K562 (cell line): ENCODE measurements at regions of chr1 and their contacts with region 1.

Region 1: DNA sequence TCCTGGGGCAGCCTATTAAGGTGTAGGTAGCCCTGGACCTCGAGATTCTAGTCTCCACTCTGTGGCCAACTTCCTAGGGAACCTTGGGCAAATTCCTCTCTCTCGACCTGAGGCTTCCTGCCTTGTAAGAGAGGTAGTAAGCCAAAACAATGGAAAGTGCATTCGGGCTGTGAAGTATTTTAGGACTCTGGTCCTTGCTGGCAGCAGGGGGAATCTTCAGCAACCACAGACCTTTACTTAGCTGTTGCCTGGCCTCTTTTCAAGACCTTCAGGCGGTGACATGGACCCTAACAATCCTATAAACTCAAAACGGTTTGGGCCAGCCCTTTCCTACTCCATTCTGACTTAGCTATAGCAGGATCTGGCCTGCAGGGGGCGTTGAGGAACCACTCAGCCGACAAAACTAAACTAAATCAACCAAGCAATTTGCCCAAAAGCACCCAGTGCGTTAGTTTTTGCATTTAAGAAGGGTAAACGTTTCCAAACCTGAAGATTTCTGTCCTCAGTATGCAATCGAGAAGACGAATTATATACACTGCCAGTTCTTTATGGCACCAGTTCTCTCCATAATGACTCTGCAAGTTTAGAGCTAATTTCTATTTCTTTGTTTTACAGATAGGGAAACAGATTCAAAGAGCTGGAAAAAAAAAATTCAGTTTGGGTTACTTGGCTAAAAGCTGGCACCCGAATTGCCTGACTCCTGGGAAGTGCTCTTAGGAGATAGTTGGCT is 10.9 kb upstream of the SESN2 start:
- DNase-seq: peak; percentile 67 to 92 (median 74)
- ATAC-seq: peak; percentile 71
- H3K4me3 ChIP-seq: peak overlapping the region; percentile 0; the same call in 1 of the 2 replicates
- H3K27ac ChIP-seq: peak overlapping the region; percentile 81
- H3K4me1 ChIP-seq: peaks cover 14 to 36% of the 10 kb centered on the region in 2 experiments
- H3K27me3 ChIP-seq: no peaks in the 10 kb centered on the region
- CTCF ChIP-seq: peak; percentile 88 to 99 (median 98)
- EP300 ChIP-seq: peak; percentile 60
- POLR2A ChIP-seq: no peak
- RAD21 ChIP-seq: peak; percentile 92

Region 2: DNA sequence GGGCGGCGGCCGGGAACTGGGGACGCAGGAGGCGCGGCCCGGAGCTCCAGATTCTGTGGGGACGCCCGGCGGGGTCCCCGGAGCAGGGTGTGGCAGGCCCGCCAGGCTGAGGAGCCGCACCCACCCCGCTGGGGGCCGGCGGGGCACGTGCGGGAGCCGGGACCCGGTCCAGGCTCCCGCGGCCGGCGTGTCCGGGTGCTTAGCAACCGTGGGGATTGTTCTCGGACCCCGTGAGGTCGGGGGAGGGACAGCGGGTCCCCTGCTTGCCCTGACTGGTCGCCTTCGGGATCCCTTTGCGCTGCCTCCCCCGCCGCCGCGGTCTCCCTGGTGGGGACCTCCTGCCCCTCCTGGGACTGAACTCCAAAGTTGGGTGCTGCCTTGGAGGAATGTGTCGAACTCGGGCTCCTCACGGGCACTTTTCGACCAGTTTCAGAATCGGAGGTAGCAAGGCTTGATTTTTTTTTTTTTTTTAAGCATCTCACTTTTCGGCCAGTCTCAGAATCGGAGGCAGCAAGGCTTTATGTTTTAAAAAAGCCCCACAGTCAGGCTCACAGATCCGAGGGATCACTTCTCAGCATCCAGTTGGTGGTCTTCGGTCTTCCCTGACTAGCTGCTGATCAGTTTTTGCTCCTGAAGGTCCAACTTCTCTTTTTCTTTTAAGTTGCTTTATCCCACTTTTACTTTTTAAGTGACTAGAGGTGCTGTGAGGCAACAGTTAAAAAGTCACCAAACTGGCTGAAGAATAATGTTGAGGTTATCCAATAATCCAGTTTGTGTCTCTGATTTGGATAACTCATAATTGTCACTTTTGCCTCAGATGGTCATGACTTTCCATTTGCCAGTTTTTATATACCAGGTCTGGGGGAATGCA is 522.0 kb before region 1 on chr1:
- CTCF ChIA-PET with region 1: no interaction called
- POLR2A ChIA-PET with region 1: no interaction called
- in situ Hi-C with region 1: no loop called
- intact Hi-C with region 1: no loop called
- DNase-seq: peak; percentile 77 to 88 (median 84)
- ATAC-seq: peak; percentile 60
- H3K4me3 ChIP-seq: peak overlapping the region; percentile 86
- H3K27ac ChIP-seq: peak overlapping the region; percentile 69
- H3K4me1 ChIP-seq: peaks cover 13 to 18% of the 10 kb centered on the region in 2 experiments; a peak in 4 of 5 replicates
- H3K27me3 ChIP-seq: no peaks in the 10 kb centered on the region
- CTCF ChIP-seq: no peak
- EP300 ChIP-seq: no peak
- POLR2A ChIP-seq: peak; percentile 23; the same call in 1 of the 2 replicates
- RAD21 ChIP-seq: no peak

Region 3: DNA sequence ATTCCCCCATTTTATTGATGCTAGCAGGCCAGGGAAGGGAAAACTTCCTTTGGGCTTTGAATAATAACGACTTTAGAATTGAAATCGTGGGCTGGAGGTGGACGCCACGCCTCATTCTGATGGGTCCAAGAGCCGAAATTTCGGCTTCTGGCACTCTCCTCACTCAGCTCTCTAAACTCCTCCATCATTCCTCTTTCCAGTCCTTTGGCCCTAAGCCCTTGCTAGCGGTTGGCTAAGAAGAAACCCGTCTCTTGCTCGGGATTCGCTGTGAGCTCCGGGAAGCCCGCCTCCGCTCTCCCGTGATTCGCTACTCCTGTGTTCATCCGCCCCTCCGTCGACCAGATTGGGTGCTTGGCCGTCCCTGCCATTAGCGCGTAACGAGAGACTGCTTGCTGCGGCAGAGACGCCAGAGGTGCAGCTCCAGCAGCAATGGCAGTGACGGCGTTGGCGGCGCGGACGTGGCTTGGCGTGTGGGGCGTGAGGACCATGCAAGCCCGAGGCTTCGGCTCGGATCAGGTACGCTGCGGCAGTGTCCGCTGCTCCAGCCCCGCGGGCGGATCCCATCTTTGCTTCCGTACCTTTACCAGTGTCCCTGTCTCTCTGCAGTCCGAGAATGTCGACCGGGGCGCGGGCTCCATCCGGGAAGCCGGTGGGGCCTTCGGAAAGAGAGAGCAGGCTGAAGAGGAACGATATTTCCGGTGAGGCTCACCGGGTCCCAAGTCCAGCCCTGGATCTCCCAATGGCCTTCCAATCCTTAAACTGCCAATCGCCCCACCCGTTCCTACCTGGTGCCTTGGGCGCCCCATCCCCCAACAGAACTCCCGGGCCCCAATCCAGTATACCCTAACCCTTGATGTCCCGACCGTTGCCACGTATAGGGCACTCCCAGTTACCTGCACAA is 12.4 kb before region 1 on chr1 and contains the start of gene ATP5IF1:
- CTCF ChIA-PET with region 1: no interaction called
- POLR2A ChIA-PET with region 1: interaction called, 40 read pairs
- in situ Hi-C with region 1: no loop called
- intact Hi-C with region 1: no loop called
- DNase-seq: peak; percentile 99 to 100 (median 99)
- ATAC-seq: peak; percentile 93
- H3K4me3 ChIP-seq: peak within 1 kb of the TSS; percentile 67
- H3K27ac ChIP-seq: peak within 1 kb of the TSS; percentile 71
- H3K4me1 ChIP-seq: peaks cover 19 to 29% of the 10 kb centered on the region in 2 experiments
- H3K27me3 ChIP-seq: no peaks in the 10 kb centered on the region
- CTCF ChIP-seq: no peak
- EP300 ChIP-seq: 0 out of 2 replicates have a peak, but pooled peaks have one; percentile 20
- POLR2A ChIP-seq: peak; percentile 98
- RAD21 ChIP-seq: no peak
- polyA plus RNA-seq, gene ATP5IF1: 292 to 545 TPM

Region 4: DNA sequence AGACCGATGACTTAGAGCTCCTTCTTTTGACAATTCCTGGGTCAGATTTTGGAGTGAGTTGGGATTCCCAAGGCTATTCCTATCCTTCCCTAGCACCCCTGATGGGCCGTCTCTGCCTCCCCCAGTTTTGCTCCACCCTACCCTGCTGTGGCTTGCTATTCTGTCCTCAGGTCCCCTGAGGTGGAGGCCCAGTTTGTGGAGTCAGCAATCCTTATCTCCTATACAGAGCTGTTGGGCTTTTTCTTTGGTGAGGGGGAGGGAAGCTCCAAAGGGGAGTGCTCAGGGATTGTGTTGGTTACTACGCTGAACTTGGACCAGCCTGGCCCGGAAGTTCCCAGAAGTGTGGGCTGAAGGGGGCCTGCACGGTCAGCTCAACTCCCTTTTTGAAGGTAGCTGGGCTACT is 18.5 kb after region 1 on chr1:
- CTCF ChIA-PET with region 1: interaction called, 6 read pairs
- POLR2A ChIA-PET with region 1: interaction called, 245 read pairs
- in situ Hi-C with region 1: no loop called
- intact Hi-C with region 1: loop called (anchors 2 kb)
- DNase-seq: peak; percentile 76 to 94 (median 81)
- ATAC-seq: peak; percentile 85
- H3K4me3 ChIP-seq: no peak overlapping the region
- H3K27ac ChIP-seq: peak overlapping the region; percentile 71
- H3K4me1 ChIP-seq: peaks cover 44 to 56% of the 10 kb centered on the region in 2 experiments
- H3K27me3 ChIP-seq: no peaks in the 10 kb centered on the region
- CTCF ChIP-seq: no peak
- EP300 ChIP-seq: peak; percentile 86; the same call in 1 of the 2 replicates
- POLR2A ChIP-seq: no peak
- RAD21 ChIP-seq: no peak; a peak in 1 of 4 replicates

Region 5: DNA sequence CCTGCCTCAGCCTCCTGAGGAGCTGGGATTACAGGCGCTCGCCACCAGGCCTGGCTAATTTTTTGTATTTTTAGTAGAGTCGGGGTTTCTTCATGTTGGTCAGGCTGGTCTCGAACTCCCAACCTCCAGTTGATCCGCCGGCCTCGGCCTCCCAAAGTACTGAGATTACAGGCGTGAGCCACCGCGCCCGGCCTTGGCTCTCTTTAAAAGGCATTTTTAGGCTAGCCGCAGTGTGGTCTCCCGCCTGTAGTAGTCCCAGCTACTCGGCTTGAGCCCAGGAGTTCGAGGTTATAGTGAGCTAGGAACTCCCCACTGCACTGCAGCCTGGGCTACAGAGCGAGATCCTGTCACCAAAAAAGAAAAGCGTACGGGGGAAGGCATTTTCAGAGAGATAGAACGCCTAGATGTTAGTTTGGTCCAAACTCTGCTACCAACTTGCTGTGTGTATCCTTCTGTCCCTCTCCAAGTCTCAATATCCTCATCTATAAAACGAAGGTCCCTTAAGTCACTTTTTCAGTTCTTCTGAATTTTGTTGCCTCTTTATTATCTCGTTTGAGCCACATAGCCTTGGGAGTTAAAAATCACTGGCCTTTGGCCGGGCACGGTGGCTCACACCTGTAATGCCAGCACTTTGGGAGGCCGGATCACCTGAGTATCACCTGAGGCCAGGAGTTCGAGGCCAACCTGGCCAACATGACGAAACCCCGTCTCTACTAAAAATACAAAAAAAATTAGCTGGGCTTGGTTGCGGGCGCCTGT is 81.1 kb after region 1 on chr1:
- CTCF ChIA-PET with region 1: no interaction called
- POLR2A ChIA-PET with region 1: interaction called, 15 read pairs
- in situ Hi-C with region 1: no loop called
- intact Hi-C with region 1: loop called (anchors 5 kb)
- DNase-seq: peak in 2 of 4 experiments; percentile 27 to 70
- ATAC-seq: peak; percentile 74
- H3K4me3 ChIP-seq: peak overlapping the region; percentile 72
- H3K27ac ChIP-seq: peak overlapping the region; percentile 84
- H3K4me1 ChIP-seq: peaks cover 17 to 33% of the 10 kb centered on the region in 2 experiments
- H3K27me3 ChIP-seq: no peaks in the 10 kb centered on the region
- CTCF ChIP-seq: no peak
- EP300 ChIP-seq: no peak
- POLR2A ChIP-seq: no peak
- RAD21 ChIP-seq: peak in 1 of 2 experiments; percentile 7; a peak in 1 of 4 replicates

Region 6: GRCh38 chr1:28369371-28370238 is 121.2 kb after region 1 on chr1 and contains the start of gene PHACTR4:
- CTCF ChIA-PET with region 1: interaction called, 5 read pairs
- POLR2A ChIA-PET with region 1: interaction called, 20 read pairs
- in situ Hi-C with region 1: no loop called
- intact Hi-C with region 1: loop called (anchors 1 kb)
- DNase-seq: peak; percentile 95 to 99 (median 97)
- ATAC-seq: peak; percentile 97
- H3K4me3 ChIP-seq: peak within 1 kb of the TSS; percentile 55
- H3K27ac ChIP-seq: peak within 1 kb of the TSS; percentile 89
- H3K4me1 ChIP-seq: peaks cover 17 to 31% of the 10 kb centered on the region in 2 experiments; a peak in 4 of 5 replicates
- H3K27me3 ChIP-seq: no peaks in the 10 kb centered on the region
- CTCF ChIP-seq: peak in 1 of 3 experiments; percentile 13; a peak in 2 of 6 replicates
- EP300 ChIP-seq: peak; percentile 34
- POLR2A ChIP-seq: peak; percentile 99
- RAD21 ChIP-seq: peak in 1 of 2 experiments; percentile 10; a peak in 2 of 4 replicates
- polyA plus RNA-seq, gene PHACTR4: 12.8 to 14.2 TPM

Region 7: GRCh38 chr1:28470146-28470545 is 221.7 kb after region 1 on chr1:
- CTCF ChIA-PET with region 1: no interaction called
- POLR2A ChIA-PET with region 1: no interaction called
- in situ Hi-C with region 1: no loop called
- intact Hi-C with region 1: loop called (anchors 2 kb)
- DNase-seq: no peak
- ATAC-seq: no peak
- H3K4me3 ChIP-seq: no peak overlapping the region
- H3K27ac ChIP-seq: no peak overlapping the region
- H3K4me1 ChIP-seq: peaks cover 7 to 8% of the 10 kb centered on the region in 2 experiments; a peak in 3 of 5 replicates
- H3K27me3 ChIP-seq: no peaks in the 10 kb centered on the region
- CTCF ChIP-seq: no peak
- EP300 ChIP-seq: no peak
- POLR2A ChIP-seq: no peak
- RAD21 ChIP-seq: no peak

Region 8: DNA sequence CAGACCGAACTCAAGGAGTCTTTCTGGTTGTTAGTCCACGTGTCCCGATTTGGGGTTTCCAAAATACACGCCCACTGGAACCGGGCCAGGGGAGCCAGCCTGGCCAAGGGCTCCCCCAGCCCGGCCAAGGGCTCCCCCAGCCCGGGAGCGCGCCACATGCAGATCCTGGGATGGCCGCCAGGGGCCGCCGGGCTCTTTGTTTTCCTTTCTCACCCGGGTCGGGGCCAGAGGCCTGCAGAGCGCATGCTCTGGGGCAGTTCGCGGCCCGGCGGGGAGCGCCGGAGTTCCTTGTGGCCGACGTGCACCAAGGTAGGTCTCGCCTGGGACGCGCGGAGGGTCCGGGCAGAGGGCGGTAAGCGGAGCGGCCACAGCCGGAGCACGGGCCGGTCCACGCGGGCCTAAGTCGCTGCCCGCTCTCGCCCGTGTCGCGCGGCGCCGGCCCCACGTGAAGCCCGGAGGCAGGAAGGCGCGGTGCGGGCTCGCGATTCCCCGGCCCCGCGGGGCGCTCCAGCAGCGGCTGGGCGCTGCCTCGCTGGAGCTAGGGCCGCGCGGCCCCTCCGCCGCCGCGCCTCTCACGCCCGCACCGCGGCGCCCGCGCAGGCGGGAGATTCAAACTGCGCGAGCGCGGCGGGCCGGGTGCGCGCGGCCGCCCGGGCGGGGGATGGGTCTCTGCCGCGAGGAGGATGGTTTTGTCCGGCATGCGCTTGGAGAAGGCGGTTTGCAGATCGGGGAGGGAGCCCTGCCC is 269.7 kb after region 1 on chr1:
- CTCF ChIA-PET with region 1: no interaction called
- POLR2A ChIA-PET with region 1: interaction called, 5 read pairs
- in situ Hi-C with region 1: no loop called
- intact Hi-C with region 1: loop called (anchors 5 kb)
- DNase-seq: peak; percentile 93 to 96 (median 94)
- ATAC-seq: peak; percentile 76
- H3K4me3 ChIP-seq: peak overlapping the region; percentile 74
- H3K27ac ChIP-seq: peak overlapping the region; percentile 99
- H3K4me1 ChIP-seq: peaks cover 46 to 47% of the 10 kb centered on the region in 2 experiments
- H3K27me3 ChIP-seq: no peaks in the 10 kb centered on the region
- CTCF ChIP-seq: peak; percentile 96 to 99 (median 96)
- EP300 ChIP-seq: no peak
- POLR2A ChIP-seq: peak; percentile 87
- RAD21 ChIP-seq: peak; percentile 91 to 94